ENCODE measurements at regions of chr3 and their contacts with region 1.

Region 1: GRCh38 chr3:127544192-127544802 is 46.2 kb downstream of the TPRA1 start:
- DNase-seq: no peak
- ATAC-seq: peak; percentile 88
- H3K4me3 ChIP-seq: no peak overlapping the region
- H3K27ac ChIP-seq: no peak overlapping the region
- H3K4me1 ChIP-seq: no peaks in the 10 kb centered on the region
- H3K27me3 ChIP-seq: peaks cover 0 to 1% of the 10 kb centered on the region in 2 experiments; a peak in 3 of 4 replicates
- CTCF ChIP-seq: peak; percentile 85 to 90 (median 86)
- EP300 ChIP-seq: no peak
- POLR2A ChIP-seq: no peak
- RAD21 ChIP-seq: peak; percentile 80

Region 2: GRCh38 chr3:126134219-126134975 is 1409.9 kb before region 1 on chr3:
- CTCF ChIA-PET with region 1: interaction called, 3 read pairs
- POLR2A ChIA-PET with region 1: no interaction called
- RAD21 ChIA-PET with region 1: no interaction called
- SMC1A ChIA-PET with region 1: no interaction called
- in situ Hi-C with region 1: no loop called
- intact Hi-C with region 1: loop called (anchors 10 kb)
- DNase-seq: no peak
- ATAC-seq: peak; percentile 95
- H3K4me3 ChIP-seq: no peak overlapping the region
- H3K27ac ChIP-seq: no peak overlapping the region
- H3K4me1 ChIP-seq: no peaks in the 10 kb centered on the region
- H3K27me3 ChIP-seq: peaks cover 0 to 3% of the 10 kb centered on the region in 2 experiments; a peak in 1 of 4 replicates
- CTCF ChIP-seq: peak; percentile 53 to 74 (median 72); a peak in 5 of 6 replicates
- EP300 ChIP-seq: no peak
- POLR2A ChIP-seq: no peak
- RAD21 ChIP-seq: peak; percentile 66

Region 3: GRCh38 chr3:126522363-126522788 is 1021.9 kb before region 1 on chr3:
- CTCF ChIA-PET with region 1: interaction called, 19 read pairs
- POLR2A ChIA-PET with region 1: no interaction called
- RAD21 ChIA-PET with region 1: interaction called, 3 read pairs
- SMC1A ChIA-PET with region 1: interaction called, 4 read pairs
- in situ Hi-C with region 1: no loop called
- intact Hi-C with region 1: loop called (anchors 1 kb)
- DNase-seq: no peak
- ATAC-seq: peak; percentile 72
- H3K4me3 ChIP-seq: no peak overlapping the region
- H3K27ac ChIP-seq: no peak overlapping the region
- H3K4me1 ChIP-seq: no peaks in the 10 kb centered on the region
- H3K27me3 ChIP-seq: no peaks in the 10 kb centered on the region; a peak in 1 of 4 replicates
- CTCF ChIP-seq: peak; percentile 72 to 89 (median 87)
- EP300 ChIP-seq: no peak
- POLR2A ChIP-seq: no peak
- RAD21 ChIP-seq: peak; percentile 62

Region 4: DNA sequence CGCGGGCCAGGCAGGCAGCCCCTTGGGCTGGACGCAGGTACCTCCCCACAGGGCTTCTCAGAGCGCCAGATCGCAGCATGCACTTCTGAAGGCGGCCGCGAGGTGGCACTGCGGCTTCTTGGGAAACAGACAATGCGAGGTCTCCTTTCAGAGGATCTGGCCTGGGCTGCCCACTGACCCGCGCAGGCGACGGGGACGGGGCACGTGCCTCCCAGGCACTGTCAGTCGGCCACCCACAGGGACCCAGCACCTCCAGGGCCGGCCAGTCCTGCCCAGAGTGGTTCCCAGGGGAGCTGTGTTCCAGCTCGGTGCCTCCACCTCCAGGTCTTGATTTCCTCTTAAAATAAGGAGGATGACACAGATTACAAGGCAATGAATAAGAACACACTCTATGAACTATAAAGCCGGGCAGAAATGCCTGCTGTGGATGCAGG is 865.0 kb before region 1 on chr3:
- CTCF ChIA-PET with region 1: interaction called, 28 read pairs
- POLR2A ChIA-PET with region 1: no interaction called
- RAD21 ChIA-PET with region 1: interaction called, 19 read pairs
- SMC1A ChIA-PET with region 1: interaction called, 4 read pairs
- in situ Hi-C with region 1: no loop called
- intact Hi-C with region 1: loop called (anchors 1 kb)
- DNase-seq: peak; percentile 4
- ATAC-seq: peak; percentile 98
- H3K4me3 ChIP-seq: no peak overlapping the region
- H3K27ac ChIP-seq: no peak overlapping the region
- H3K4me1 ChIP-seq: 0 out of 2 replicates have a peak, but pooled peaks cover 3% of the 10 kb centered on the region
- H3K27me3 ChIP-seq: peaks cover 0 to 2% of the 10 kb centered on the region in 2 experiments; a peak in 2 of 4 replicates
- CTCF ChIP-seq: peak; percentile 89 to 98 (median 94)
- EP300 ChIP-seq: no peak
- POLR2A ChIP-seq: no peak
- RAD21 ChIP-seq: peak; percentile 82

Region 5: DNA sequence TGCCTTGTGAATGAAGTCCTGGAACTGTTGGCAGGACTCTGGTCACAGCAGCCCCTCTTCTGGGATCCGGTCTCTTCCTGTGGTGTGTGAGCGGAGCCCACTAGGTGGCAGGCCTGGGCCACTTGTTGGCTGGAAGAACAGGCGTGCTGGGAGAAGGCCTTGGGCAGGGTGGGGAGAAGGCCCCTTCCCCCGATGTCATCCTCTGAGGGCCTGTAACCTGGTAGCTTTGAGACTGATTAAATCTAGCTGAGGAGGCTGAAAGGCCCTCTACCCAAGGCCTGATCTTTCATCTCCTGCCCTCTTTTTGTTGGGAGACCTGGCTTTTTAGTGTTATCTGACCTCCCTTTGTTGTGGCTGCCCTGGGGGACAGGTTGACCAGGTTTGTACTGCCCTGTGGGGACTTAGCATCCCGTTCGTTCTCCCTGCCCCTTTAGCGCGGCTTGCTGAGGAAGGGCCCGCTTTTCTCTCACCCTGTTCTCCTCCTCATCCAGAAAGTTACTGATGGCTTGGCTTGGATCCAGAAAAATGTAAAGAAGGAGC is 791.9 kb before region 1 on chr3:
- CTCF ChIA-PET with region 1: interaction called, 26 read pairs
- POLR2A ChIA-PET with region 1: no interaction called
- RAD21 ChIA-PET with region 1: interaction called, 4 read pairs
- SMC1A ChIA-PET with region 1: no interaction called
- in situ Hi-C with region 1: loop called (anchors 10 kb)
- intact Hi-C with region 1: loop called (anchors 2 kb)
- DNase-seq: peak; percentile 30
- ATAC-seq: peak; percentile 100
- H3K4me3 ChIP-seq: no peak overlapping the region
- H3K27ac ChIP-seq: no peak overlapping the region
- H3K4me1 ChIP-seq: no peaks in the 10 kb centered on the region
- H3K27me3 ChIP-seq: no peaks in the 10 kb centered on the region
- CTCF ChIP-seq: peak; percentile 93 to 95 (median 95)
- EP300 ChIP-seq: no peak
- POLR2A ChIP-seq: no peak
- RAD21 ChIP-seq: peak; percentile 99

Region 6: GRCh38 chr3:127406309-127407025 is 137.8 kb before region 1 on chr3:
- CTCF ChIA-PET with region 1: no interaction called
- POLR2A ChIA-PET with region 1: no interaction called
- RAD21 ChIA-PET with region 1: no interaction called
- SMC1A ChIA-PET with region 1: no interaction called
- in situ Hi-C with region 1: no loop called
- intact Hi-C with region 1: loop called (anchors 10 kb)
- DNase-seq: no peak
- ATAC-seq: peak; percentile 77
- H3K4me3 ChIP-seq: no peak overlapping the region
- H3K27ac ChIP-seq: no peak overlapping the region
- H3K4me1 ChIP-seq: peaks cover 3% of the 10 kb centered on the region; the same call in 1 of the 2 replicates
- H3K27me3 ChIP-seq: peaks cover 7 to 8% of the 10 kb centered on the region in 2 experiments; a peak in 2 of 4 replicates
- CTCF ChIP-seq: peak; percentile 24 to 57 (median 29); a peak in 5 of 6 replicates
- EP300 ChIP-seq: no peak
- POLR2A ChIP-seq: no peak
- RAD21 ChIP-seq: no peak

Region 7: DNA sequence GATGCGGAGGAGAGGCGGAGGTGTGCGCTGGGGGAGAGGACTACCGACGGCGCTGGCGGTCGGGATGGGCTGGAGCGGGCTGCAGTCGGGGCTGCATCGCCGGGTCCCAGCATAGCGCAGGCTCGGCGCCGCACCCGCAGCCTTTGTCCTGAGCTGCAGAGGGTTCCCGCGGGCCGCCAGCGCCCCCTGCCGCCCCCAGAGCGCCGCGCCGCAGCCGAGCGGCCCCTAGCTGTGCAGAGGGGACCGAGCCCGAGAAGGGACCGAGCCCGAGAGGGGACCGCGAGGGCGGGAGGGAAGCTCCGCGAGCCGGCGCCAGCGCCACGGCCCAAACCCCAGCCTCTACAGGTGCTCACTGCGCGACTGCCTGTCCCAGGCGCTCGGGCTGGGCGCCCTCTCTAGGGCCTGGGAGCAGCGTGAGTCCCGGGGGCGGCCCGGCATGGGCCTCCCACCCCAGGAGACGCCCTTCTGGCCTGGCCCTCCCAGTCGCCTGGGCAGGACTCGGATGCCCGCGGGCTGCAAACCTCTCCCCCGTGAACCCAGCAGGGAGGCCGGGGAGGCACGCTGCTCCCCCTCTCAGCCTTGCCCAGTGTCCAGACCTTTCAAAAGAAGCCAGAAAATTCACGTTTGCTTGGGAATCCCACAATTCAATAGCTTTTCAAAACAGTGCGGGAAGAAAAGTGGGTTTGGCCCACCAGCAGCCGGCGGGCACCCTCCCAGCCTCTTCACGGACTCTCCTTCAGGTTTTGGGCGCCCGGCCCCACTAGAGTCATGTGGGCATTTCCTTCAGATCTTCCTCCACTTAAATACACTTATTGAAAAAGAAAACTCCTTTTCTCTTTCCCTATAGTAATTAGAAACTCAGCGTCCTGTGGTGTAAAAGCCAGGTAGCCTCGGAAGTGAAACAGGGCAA is 88.5 kb before region 1 on chr3:
- CTCF ChIA-PET with region 1: interaction called, 6 read pairs
- POLR2A ChIA-PET with region 1: no interaction called
- RAD21 ChIA-PET with region 1: interaction called, 5 read pairs
- SMC1A ChIA-PET with region 1: no interaction called
- in situ Hi-C with region 1: no loop called
- intact Hi-C with region 1: loop called (anchors 10 kb)
- DNase-seq: no peak
- ATAC-seq: peak; percentile 99
- H3K4me3 ChIP-seq: no peak overlapping the region
- H3K27ac ChIP-seq: no peak overlapping the region
- H3K4me1 ChIP-seq: no peaks in the 10 kb centered on the region
- H3K27me3 ChIP-seq: peaks cover 12 to 16% of the 10 kb centered on the region in 2 experiments
- CTCF ChIP-seq: peak; percentile 62 to 81 (median 80); a peak in 5 of 6 replicates
- EP300 ChIP-seq: no peak
- POLR2A ChIP-seq: no peak
- RAD21 ChIP-seq: peak; percentile 89

Measured in GM12878 (cell line).